ENCODE measurements at regions of chr11 and their contacts with region 1.

Region 1: DNA sequence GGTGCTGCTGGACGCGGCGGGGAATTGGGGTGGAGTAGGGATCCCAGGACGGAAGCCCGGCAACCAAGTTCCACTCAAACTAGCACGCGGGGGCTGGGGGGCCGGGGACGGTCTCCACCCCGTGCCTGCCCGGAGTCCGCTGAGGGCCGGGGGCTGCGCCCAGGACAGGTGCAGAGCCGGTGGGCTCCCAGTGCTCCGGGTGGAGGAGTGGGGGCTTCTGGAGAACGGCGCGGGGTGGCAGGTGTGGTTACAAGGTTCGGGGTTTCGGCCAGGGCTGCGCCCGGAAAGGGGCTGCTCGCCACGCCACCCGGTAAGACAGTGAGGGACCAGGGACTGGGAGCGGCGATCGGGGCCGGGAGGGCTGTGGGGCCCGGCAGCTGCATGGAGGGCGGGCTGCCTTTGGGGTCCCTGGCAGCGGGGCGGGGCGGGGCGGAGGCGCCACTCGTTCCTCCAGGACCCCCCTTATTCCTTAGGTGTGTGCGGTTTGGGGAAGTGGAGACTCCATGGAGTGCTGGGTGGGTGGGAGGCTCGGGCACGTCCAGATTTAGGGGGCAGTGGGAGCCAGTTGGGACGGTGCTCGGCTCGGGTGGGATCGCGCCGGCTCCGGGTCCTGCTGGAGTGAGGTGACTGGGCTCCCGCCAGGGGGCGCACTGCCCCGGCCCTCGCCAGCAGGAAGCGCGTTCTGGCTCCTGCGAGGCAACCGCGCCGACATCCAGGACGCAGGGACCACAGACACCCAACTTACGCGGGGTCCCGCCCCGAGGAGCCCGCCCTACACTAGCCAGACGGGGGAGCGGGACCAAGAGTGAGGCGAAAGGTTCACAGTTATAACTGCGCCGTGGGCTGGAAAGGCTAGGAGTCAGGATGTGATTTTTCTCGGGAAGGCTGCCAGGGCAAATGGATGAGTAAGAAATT is 868 bp downstream of the TSPAN18 start:
- DNase-seq: peak; percentile 67 to 79
- ATAC-seq: peak; percentile 92

Region 2: GRCh38 chr11:44538375-44539054 is 189.1 kb before region 1 on chr11:
- intact Hi-C with region 1: no loop called
- DNase-seq: peak in 1 of 2 donors; percentile 71
- ATAC-seq: peak; percentile 90

Region 3: GRCh38 chr11:44634401-44635281 is 93.0 kb before region 1 on chr11:
- intact Hi-C with region 1: loop called in 1 of 2 experiments (anchors 10 kb)
- DNase-seq: peak; percentile 50 to 59
- ATAC-seq: peak; percentile 11

Region 4: GRCh38 chr11:44899959-44900358 is 172.3 kb after region 1 on chr11:
- intact Hi-C with region 1: loop called in 1 of 2 experiments (anchors 5 kb)
- DNase-seq: no peak
- ATAC-seq: peak; percentile 34

Measured in left colon (tissue), 2 donors.